ENCODE measurements at regions of chr3 and their contacts with region 1.

Region 1: GRCh38 chr3:114213627-114214541 is 23.5 kb downstream of the ZNF80 start:
- DNase-seq: peak; percentile 86
- ATAC-seq: peak; percentile 76
- H3K4me3 Mint-ChIP-seq: no peak overlapping the region
- H3K27ac Mint-ChIP-seq: no peak overlapping the region
- H3K4me1 Mint-ChIP-seq: peaks cover 17% of the 10 kb centered on the region
- H3K27me3 Mint-ChIP-seq: no peaks in the 10 kb centered on the region

Region 2: GRCh38 chr3:113531826-113532697 is 681.8 kb before region 1 on chr3 and contains the start of gene SIDT1:
- CTCF ChIA-PET with region 1: no interaction called
- POLR2A ChIA-PET with region 1: no interaction called
- intact Hi-C with region 1: loop called in 1 of 2 experiments (anchors 5 kb)
- DNase-seq: peak; percentile 85
- ATAC-seq: peak; percentile 78
- H3K4me3 Mint-ChIP-seq: peak within 1 kb of the TSS; percentile 89
- H3K27ac Mint-ChIP-seq: peak within 1 kb of the TSS; percentile 96
- H3K4me1 Mint-ChIP-seq: peaks cover 49% of the 10 kb centered on the region
- H3K27me3 Mint-ChIP-seq: no peaks in the 10 kb centered on the region
- total RNA-seq, gene SIDT1: 19.0 to 19.7 TPM

Region 3: DNA sequence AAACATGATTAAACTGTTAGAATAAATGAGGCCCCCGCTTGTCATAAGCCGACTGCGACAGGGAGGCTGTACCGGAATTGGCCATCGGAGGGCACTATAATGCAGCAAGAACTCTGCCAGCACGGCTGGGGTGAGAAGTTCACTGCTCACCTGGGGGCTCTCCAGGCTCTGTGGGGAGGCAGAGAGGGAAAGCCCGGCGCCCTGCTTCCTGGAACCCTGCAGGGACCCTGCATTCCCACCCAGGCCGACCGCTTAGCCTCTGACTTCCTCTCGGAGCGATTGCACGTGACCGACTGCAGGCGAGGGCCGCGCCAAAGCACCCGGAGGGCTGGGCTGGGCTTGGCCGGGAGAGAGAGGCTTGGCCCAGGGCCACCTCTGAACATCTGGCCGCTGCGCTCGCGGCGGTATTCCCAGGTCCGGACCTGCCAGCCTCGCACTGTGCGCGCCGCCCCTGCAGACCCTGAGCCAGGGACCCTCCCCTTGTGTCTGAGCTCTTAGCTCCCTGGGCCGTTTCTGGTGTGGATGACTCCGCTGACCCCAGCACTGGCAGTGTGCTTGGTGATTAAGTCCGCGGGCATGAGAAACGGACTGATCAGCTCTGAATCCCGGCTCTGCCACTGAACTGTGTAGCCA is 61.2 kb before region 1 on chr3:
- CTCF ChIA-PET with region 1: interaction called, 8 read pairs
- POLR2A ChIA-PET with region 1: no interaction called
- intact Hi-C with region 1: loop called (anchors 2 kb)
- DNase-seq: peak; percentile 91
- ATAC-seq: peak; percentile 92
- H3K4me3 Mint-ChIP-seq: peak overlapping the region; percentile 15
- H3K27ac Mint-ChIP-seq: no peak overlapping the region
- H3K4me1 Mint-ChIP-seq: peaks cover 11% of the 10 kb centered on the region
- H3K27me3 Mint-ChIP-seq: no peaks in the 10 kb centered on the region

Region 4: DNA sequence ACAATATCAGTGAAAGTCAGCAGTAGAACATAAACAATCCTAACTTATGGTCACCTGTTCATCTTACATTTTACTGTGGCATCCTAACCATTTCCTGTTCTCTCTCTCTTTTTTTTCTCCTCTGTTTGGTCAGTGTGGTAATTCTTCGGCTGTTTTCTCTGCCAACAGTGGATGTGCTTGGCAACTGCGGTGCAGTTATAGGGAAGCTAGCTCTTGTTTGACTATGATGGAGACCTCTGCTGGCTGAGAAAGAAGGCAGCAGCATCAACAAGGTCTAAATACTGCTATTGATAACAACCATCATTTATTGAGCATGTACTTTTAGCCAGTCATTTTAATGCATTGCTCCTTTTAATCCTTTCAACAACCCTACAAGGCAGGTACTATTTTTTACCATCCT is 34.3 kb before region 1 on chr3:
- CTCF ChIA-PET with region 1: no interaction called
- POLR2A ChIA-PET with region 1: no interaction called
- intact Hi-C with region 1: no loop called
- DNase-seq: peak; percentile 19
- ATAC-seq: peak; percentile 30
- H3K4me3 Mint-ChIP-seq: no peak overlapping the region
- H3K27ac Mint-ChIP-seq: no peak overlapping the region
- H3K4me1 Mint-ChIP-seq: peaks cover 4% of the 10 kb centered on the region
- H3K27me3 Mint-ChIP-seq: peaks cover 13% of the 10 kb centered on the region

Region 5: GRCh38 chr3:114314282-114314681 is 100.4 kb after region 1 on chr3:
- CTCF ChIA-PET with region 1: interaction called, 5 read pairs
- POLR2A ChIA-PET with region 1: interaction called, 3 read pairs
- intact Hi-C with region 1: loop called (anchors 2 to 5 kb)
- DNase-seq: no peak
- ATAC-seq: no peak
- H3K4me3 Mint-ChIP-seq: no peak overlapping the region
- H3K27ac Mint-ChIP-seq: peak overlapping the region; percentile 59
- H3K4me1 Mint-ChIP-seq: peaks cover 65% of the 10 kb centered on the region
- H3K27me3 Mint-ChIP-seq: no peaks in the 10 kb centered on the region

Region 6: GRCh38 chr3:114504941-114505632 is 291.2 kb after region 1 on chr3:
- CTCF ChIA-PET with region 1: no interaction called
- POLR2A ChIA-PET with region 1: no interaction called
- intact Hi-C with region 1: loop called in 1 of 2 experiments (anchors 2 kb)
- DNase-seq: no peak
- ATAC-seq: peak; percentile 94
- H3K4me3 Mint-ChIP-seq: no peak overlapping the region
- H3K27ac Mint-ChIP-seq: no peak overlapping the region
- H3K4me1 Mint-ChIP-seq: peaks cover 40% of the 10 kb centered on the region
- H3K27me3 Mint-ChIP-seq: peaks cover 19% of the 10 kb centered on the region

Region 7: DNA sequence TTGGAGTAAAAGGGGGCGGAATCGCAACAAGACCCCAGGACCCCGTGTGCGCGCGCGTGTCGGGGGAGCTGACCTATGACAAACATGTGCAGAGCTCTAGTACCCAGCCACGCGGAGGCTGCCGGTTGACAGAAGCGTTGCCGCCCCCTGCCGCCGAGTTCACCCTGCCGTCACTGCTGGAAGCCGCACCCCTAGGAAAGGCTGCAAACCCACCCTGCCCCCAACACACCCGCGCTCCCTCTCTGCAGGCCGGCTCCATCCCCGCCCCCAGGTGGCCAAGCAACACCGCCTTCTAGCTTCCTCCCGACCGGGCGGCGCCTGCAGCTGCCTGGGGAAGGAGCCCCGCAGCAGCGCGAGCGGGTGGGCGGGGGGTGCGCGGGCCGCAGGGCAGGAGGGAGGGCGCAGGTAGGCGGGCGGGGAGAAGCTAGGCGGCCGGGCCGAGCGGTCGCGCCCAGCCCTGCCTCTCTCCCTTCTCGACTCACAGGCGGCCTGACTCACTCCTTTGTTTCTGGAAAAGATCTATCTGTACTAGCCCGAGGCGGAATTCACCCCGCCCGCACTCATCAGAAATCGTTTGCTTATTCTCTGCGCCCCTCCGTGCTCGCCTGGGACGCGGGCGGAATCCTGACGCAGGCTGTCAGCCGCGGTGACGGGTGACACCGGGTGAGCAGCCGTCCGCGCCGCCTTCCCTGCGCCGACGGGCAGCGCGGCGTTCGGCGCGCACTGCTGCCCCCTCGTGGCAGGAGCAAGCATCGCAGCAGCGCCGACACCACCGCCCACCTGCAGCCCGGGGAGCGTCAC is 1570.3 kb after region 1 on chr3:
- CTCF ChIA-PET with region 1: no interaction called
- POLR2A ChIA-PET with region 1: no interaction called
- intact Hi-C with region 1: loop called in 1 of 2 experiments (anchors 5 kb)
- DNase-seq: peak; percentile 94
- ATAC-seq: peak; percentile 91
- H3K4me3 Mint-ChIP-seq: peak overlapping the region; percentile 81
- H3K27ac Mint-ChIP-seq: peak overlapping the region; percentile 97
- H3K4me1 Mint-ChIP-seq: peaks cover 18% of the 10 kb centered on the region
- H3K27me3 Mint-ChIP-seq: no peaks in the 10 kb centered on the region